IMR-90 (cell line): ENCODE measurements at regions of chr1 and their contacts with region 1.

Region 1: GRCh38 chr1:15304701-15305467 is 57.9 kb downstream of the FHAD1 start:
- DNase-seq: peak; percentile 56
- ATAC-seq: peak; percentile 62
- H3K4me3 ChIP-seq: no peak overlapping the region
- H3K27ac ChIP-seq: no peak overlapping the region
- H3K4me1 ChIP-seq: no peaks in the 10 kb centered on the region
- H3K27me3 ChIP-seq: peaks cover 4% of the 10 kb centered on the region; the same call in 1 of the 2 replicates
- CTCF ChIP-seq: peak; percentile 79
- POLR2A ChIP-seq: no peak
- RAD21 ChIP-seq: peak; percentile 78

Region 2: DNA sequence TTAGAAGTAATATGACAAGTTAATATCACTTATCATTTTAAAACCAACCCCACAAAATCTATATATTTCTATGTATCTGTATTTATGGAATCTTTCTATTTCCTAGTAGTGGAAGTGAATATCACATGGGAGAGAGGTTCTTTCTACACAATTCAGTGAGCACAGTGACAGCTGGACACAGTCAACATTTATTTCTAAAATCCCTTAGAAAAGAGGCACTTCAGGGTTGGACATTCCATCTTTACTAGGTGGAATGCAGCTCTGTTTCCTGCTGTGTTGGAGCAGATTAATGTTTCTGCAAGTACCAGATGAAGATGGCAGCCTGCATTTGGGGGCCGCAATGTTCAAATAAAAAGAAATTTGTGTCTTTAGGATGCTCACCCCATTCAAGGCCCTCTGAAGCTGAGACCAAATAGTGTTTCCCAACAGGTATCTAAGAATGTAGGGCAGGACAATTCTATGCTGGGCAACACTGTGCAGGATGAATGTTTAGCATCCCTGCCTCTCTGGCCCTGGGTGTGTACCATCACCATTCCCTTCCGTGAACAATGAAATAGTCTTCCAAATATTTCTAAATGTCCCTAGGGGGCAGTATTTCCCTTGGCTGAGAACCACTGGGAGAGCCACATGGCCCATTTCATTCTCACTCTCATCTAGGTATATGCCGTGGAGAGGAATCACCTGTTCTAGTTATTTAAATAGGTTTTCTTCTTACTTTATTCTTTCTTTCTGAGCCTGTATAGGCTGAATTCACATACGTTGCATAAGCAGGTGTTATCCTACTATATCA is 1210.1 kb before region 1 on chr1:
- CTCF ChIA-PET with region 1: no interaction called
- POLR2A ChIA-PET with region 1: no interaction called
- dilution Hi-C with region 1: no loop called
- in situ Hi-C with region 1: no loop called
- intact Hi-C with region 1: loop called (anchors 5 kb)
- DNase-seq: no peak
- ATAC-seq: peak; percentile 46
- H3K4me3 ChIP-seq: no peak overlapping the region
- H3K27ac ChIP-seq: no peak overlapping the region
- H3K4me1 ChIP-seq: no peaks in the 10 kb centered on the region
- H3K27me3 ChIP-seq: no peaks in the 10 kb centered on the region
- CTCF ChIP-seq: no peak
- POLR2A ChIP-seq: no peak
- RAD21 ChIP-seq: no peak

Region 3: DNA sequence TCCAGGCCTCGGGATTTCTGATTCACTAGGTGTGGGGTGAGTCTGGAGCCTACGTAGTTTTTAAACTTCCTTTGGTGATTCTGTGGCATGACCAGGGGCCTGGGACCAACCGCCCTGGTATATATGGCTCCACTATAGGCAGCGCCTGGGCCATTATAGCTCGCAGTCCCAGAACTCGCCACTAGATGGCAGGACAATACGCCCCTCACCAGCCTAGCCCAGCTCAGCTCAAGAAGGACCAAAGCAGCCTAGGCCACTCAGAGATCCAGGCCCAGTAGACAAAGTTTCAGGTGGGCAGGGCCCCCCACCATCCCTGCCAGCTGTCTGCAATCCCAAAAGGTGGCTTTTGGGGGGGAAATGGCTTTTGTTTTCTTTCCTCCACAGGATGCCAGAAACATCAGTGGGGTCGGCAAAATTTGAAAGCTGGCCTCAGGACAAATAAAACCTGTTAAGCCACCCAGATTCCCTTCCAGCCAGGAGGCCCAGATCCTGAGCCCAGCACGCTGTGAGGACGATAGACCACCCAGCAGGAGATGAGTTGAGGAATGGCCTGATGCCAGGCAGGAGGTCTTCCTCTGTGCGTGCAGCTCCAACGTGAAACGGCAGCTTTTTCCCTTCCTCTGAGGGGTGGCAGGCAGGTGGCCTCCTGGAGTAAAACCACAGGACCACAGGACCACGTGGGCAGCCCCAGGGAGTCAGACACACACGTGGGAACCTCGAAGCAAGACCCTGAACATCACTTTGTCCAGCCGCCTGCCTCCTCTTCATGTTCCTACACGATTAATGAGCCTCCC is 176.2 kb before region 1 on chr1:
- CTCF ChIA-PET with region 1: interaction called, 5 read pairs
- POLR2A ChIA-PET with region 1: no interaction called
- dilution Hi-C with region 1: no loop called
- in situ Hi-C with region 1: no loop called
- intact Hi-C with region 1: loop called (anchors 1 kb)
- DNase-seq: peak; percentile 65
- ATAC-seq: peak; percentile 100
- H3K4me3 ChIP-seq: no peak overlapping the region
- H3K27ac ChIP-seq: no peak overlapping the region
- H3K4me1 ChIP-seq: no peaks in the 10 kb centered on the region
- H3K27me3 ChIP-seq: peaks cover 17% of the 10 kb centered on the region; the same call in 1 of the 2 replicates
- CTCF ChIP-seq: peak; percentile 89
- POLR2A ChIP-seq: 0 out of 2 replicates have a peak, but pooled peaks have one; percentile 50
- RAD21 ChIP-seq: peak; percentile 95

Region 4: GRCh38 chr1:15430787-15431570 is 126.1 kb after region 1 on chr1:
- CTCF ChIA-PET with region 1: no interaction called
- POLR2A ChIA-PET with region 1: no interaction called
- dilution Hi-C with region 1: no loop called
- in situ Hi-C with region 1: no loop called
- intact Hi-C with region 1: no loop called
- DNase-seq: peak; percentile 36
- ATAC-seq: peak; percentile 75
- H3K4me3 ChIP-seq: no peak overlapping the region
- H3K27ac ChIP-seq: no peak overlapping the region
- H3K4me1 ChIP-seq: peaks cover 29% of the 10 kb centered on the region
- H3K27me3 ChIP-seq: no peaks in the 10 kb centered on the region
- CTCF ChIP-seq: peak; percentile 90
- POLR2A ChIP-seq: 0 out of 2 replicates have a peak, but pooled peaks have one; percentile 35
- RAD21 ChIP-seq: peak; percentile 92

Region 5: DNA sequence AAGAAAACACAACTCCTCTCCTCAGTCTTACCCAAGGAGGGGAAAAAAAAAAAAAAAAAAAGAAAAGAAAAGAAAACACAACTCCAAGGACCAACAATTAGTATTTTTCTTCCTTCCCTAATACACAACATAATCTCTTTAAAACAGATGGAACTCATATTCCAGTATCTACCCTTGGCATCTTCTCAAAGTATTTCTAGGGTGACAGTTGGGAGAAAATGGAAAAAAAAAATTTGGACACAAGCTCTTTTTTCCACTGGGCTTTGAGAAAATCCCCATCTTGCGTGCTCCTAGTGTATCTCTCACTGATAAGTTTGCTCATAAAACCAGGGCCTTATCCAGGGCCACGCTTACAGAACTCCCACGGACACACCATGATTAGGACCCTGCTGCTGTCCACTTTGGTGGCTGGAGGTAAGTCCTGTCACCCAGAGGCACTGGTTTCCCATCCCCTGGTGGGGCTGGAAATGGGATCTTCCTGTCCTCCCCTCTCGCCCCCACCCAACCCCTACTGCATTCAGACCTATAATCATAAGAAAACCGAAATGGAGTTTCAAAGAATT is 170.9 kb after region 1 on chr1 and contains the start of gene CELA2B:
- CTCF ChIA-PET with region 1: no interaction called
- POLR2A ChIA-PET with region 1: no interaction called
- dilution Hi-C with region 1: no loop called
- in situ Hi-C with region 1: no loop called
- intact Hi-C with region 1: no loop called
- DNase-seq: no peak
- ATAC-seq: no peak
- H3K4me3 ChIP-seq: no peak within 1 kb of the TSS
- H3K27ac ChIP-seq: no peak within 1 kb of the TSS
- H3K4me1 ChIP-seq: no peaks in the 10 kb centered on the region
- H3K27me3 ChIP-seq: no peaks in the 10 kb centered on the region; the same call in 1 of the 2 replicates
- CTCF ChIP-seq: no peak
- POLR2A ChIP-seq: no peak
- RAD21 ChIP-seq: no peak
- total RNA-seq, gene CELA2B: not detected in 2 replicates